A673 (cell line): ENCODE measurements at regions of chr12 and their contacts with region 1.

Region 1: GRCh38 chr12:89542912-89543592 is 17.2 kb upstream of the POC1B start:
- DNase-seq: peak; percentile 88
- H3K4me3 ChIP-seq: no peak overlapping the region
- H3K27ac ChIP-seq: no peak overlapping the region
- H3K4me1 ChIP-seq: peaks cover 13% of the 10 kb centered on the region
- H3K27me3 ChIP-seq: no peaks in the 10 kb centered on the region
- CTCF ChIP-seq: peak; percentile 93

Region 2: DNA sequence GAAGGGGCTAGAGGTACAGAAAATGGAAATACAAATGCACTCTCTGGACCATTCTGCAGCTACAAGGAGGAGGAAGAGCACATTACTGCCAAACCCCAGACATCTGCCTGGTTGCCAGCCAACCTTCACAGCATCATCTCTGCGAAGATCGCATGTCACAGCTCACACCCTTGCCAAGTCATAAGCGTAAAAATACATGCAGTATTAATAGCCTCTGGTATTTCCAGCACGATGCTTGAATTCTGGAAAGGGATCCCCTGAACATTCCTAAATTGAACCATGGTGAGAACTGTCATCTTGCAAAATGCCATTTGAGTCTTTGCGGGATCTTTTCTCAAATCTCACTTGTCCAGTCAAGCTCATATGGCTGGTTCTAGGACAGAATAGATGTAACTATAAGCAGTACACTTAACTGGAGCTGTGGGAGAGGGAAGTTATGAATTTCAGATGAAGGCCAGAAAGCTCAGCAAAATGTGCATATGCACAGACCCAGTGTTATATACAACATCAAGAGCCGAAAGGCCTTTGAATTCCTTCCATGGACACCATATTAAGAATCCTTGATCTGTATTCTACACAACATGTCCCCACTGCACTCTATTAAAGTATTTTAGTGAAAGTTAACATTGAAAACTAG is 402.3 kb before region 1 on chr12:
- CTCF ChIA-PET with region 1: no interaction called
- POLR2A ChIA-PET with region 1: no interaction called
- intact Hi-C with region 1: no loop called
- DNase-seq: no peak
- H3K4me3 ChIP-seq: no peak overlapping the region
- H3K27ac ChIP-seq: no peak overlapping the region
- H3K4me1 ChIP-seq: peaks cover 46% of the 10 kb centered on the region
- H3K27me3 ChIP-seq: no peaks in the 10 kb centered on the region
- CTCF ChIP-seq: no peak

Region 3: GRCh38 chr12:89709157-89709994 is 166.3 kb after region 1 on chr12:
- CTCF ChIA-PET with region 1: interaction called, 3 read pairs
- POLR2A ChIA-PET with region 1: no interaction called
- intact Hi-C with region 1: loop called (anchors 5 kb)
- DNase-seq: peak; percentile 99
- H3K4me3 ChIP-seq: peak overlapping the region; percentile 89
- H3K27ac ChIP-seq: peak overlapping the region; percentile 96
- H3K4me1 ChIP-seq: peaks cover 17% of the 10 kb centered on the region
- H3K27me3 ChIP-seq: no peaks in the 10 kb centered on the region
- CTCF ChIP-seq: no peak

Region 4: GRCh38 chr12:89721291-89721987 is 178.4 kb after region 1 on chr12:
- CTCF ChIA-PET with region 1: no interaction called
- POLR2A ChIA-PET with region 1: no interaction called
- intact Hi-C with region 1: no loop called
- DNase-seq: no peak
- H3K4me3 ChIP-seq: no peak overlapping the region
- H3K27ac ChIP-seq: no peak overlapping the region
- H3K4me1 ChIP-seq: no peaks in the 10 kb centered on the region
- H3K27me3 ChIP-seq: no peaks in the 10 kb centered on the region
- CTCF ChIP-seq: no peak

Region 5: GRCh38 chr12:90102957-90103652 is 560.1 kb after region 1 on chr12:
- CTCF ChIA-PET with region 1: no interaction called
- POLR2A ChIA-PET with region 1: no interaction called
- intact Hi-C with region 1: loop called (anchors 2 kb)
- DNase-seq: peak; percentile 56
- H3K4me3 ChIP-seq: no peak overlapping the region
- H3K27ac ChIP-seq: no peak overlapping the region
- H3K4me1 ChIP-seq: peaks cover 59% of the 10 kb centered on the region
- H3K27me3 ChIP-seq: no peaks in the 10 kb centered on the region
- CTCF ChIP-seq: peak; percentile 78

Region 6: GRCh38 chr12:90333939-90334338 is 790.9 kb after region 1 on chr12:
- CTCF ChIA-PET with region 1: no interaction called
- POLR2A ChIA-PET with region 1: no interaction called
- intact Hi-C with region 1: loop called (anchors 10 kb)
- DNase-seq: no peak
- H3K4me3 ChIP-seq: no peak overlapping the region
- H3K27ac ChIP-seq: no peak overlapping the region
- H3K4me1 ChIP-seq: peaks cover 25% of the 10 kb centered on the region
- H3K27me3 ChIP-seq: no peaks in the 10 kb centered on the region
- CTCF ChIP-seq: no peak

Region 7: DNA sequence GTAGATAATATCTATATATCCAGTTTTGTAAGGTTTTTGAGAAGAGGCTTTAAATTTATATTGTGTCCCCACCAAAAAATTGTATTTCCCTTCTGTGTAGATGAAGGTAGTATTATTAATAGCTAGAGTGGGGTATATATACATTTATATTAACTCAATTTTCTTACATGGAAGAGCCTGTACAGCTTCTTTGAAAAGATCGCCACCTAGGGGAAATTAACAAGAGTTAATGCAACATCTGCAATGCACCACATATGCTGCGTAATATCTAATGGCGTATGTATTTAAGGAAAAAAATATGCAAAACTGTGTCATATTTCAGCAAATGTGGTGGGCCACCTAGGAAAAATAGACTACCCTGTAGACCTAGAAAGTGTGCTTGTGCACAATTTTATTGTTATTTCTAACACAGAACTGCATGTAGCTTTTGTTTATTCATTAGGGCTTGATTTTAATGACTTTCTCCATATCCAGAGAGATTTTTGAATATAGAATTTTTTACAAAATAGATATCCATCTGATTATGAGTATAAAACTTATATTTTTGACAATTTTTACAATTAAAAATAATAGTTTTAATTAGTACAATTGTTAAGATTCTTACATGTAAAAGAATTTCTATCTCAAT is 1397.9 kb after region 1 on chr12:
- CTCF ChIA-PET with region 1: no interaction called
- POLR2A ChIA-PET with region 1: no interaction called
- intact Hi-C with region 1: loop called (anchors 5 kb)
- DNase-seq: peak; percentile 81
- H3K4me3 ChIP-seq: no peak overlapping the region
- H3K27ac ChIP-seq: no peak overlapping the region
- H3K4me1 ChIP-seq: no peaks in the 10 kb centered on the region
- H3K27me3 ChIP-seq: no peaks in the 10 kb centered on the region
- CTCF ChIP-seq: peak; percentile 77